HCT116 (cell line): ENCODE measurements at regions of chr17 and their contacts with region 1.

Region 1: GRCh38 chr17:17919169-17920107 is 52.8 kb downstream of the TOM1L2 start:
- DNase-seq: peak; percentile 54
- ATAC-seq: peak; percentile 48
- H3K4me3 ChIP-seq: no peak overlapping the region
- H3K27ac ChIP-seq: peak overlapping the region; percentile 98
- H3K4me1 ChIP-seq: peaks cover 66 to 78% of the 10 kb centered on the region in 2 experiments
- H3K27me3 ChIP-seq: no peaks in the 10 kb centered on the region
- CTCF ChIP-seq: peak; percentile 90 to 93 (median 91)
- POLR2A ChIP-seq: no peak
- RAD21 ChIP-seq: peak; percentile 96

Region 2: GRCh38 chr17:17681187-17681848 is 238.1 kb before region 1 on chr17 and contains the start of gene RAI1:
- CTCF ChIA-PET with region 1: interaction called, 3 read pairs
- POLR2A ChIA-PET with region 1: no interaction called
- RAD21 ChIA-PET with region 1: interaction called in 1 of 2 experiments, 5 read pairs
- intact Hi-C with region 1: loop called (anchors 2 kb)
- DNase-seq: no peak
- ATAC-seq: peak; percentile 62
- H3K4me3 ChIP-seq: peak within 1 kb of the TSS; percentile 75 to 86
- H3K27ac ChIP-seq: peak within 1 kb of the TSS; percentile 97
- H3K4me1 ChIP-seq: peaks cover 40 to 56% of the 10 kb centered on the region in 2 experiments
- H3K27me3 ChIP-seq: no peaks in the 10 kb centered on the region
- CTCF ChIP-seq: peak in 2 of 3 experiments; percentile 50 to 51; a peak in 4 of 6 replicates
- POLR2A ChIP-seq: no peak
- RAD21 ChIP-seq: peak; percentile 64
- total RNA-seq, gene RAI1: 38.5 TPM

Region 3: DNA sequence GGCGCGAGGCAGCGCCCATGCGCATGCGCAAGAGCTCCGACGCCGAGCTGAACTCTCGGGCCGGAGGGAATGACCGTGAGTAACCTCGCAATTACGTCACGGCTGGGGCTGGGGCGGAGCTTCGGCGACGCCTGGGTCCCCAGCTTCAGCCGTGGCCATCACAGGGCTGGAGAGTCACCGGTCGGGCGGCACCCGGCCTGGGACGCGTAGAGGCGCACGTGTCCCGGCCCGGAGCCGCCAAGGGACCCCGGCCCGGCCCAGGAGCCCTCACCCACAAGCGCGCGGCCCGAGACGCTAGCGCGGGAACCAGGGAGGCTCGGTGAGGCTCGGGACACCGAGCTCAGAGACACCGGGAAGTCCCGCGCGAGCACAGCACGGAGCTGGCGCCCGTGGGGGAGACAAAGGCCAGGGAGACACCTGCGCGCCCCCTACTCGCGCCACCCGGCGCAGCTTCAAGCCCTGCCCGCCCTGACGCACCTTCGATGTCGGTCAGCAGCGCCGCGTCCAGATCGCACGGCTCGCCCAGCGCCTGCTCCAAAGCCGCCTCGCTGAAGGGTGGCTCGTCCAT is 83.1 kb before region 1 on chr17:
- CTCF ChIA-PET with region 1: interaction called, 7 read pairs
- POLR2A ChIA-PET with region 1: interaction called, 14 read pairs
- RAD21 ChIA-PET with region 1: no interaction called
- intact Hi-C with region 1: no loop called
- DNase-seq: peak; percentile 92
- ATAC-seq: peak; percentile 70
- H3K4me3 ChIP-seq: peak overlapping the region; percentile 78 to 84
- H3K27ac ChIP-seq: peak overlapping the region; percentile 98
- H3K4me1 ChIP-seq: peaks cover 55 to 84% of the 10 kb centered on the region in 2 experiments
- H3K27me3 ChIP-seq: no peaks in the 10 kb centered on the region
- CTCF ChIP-seq: no peak
- POLR2A ChIP-seq: peak; percentile 97
- RAD21 ChIP-seq: peak; percentile 15; the same call in 1 of the 2 replicates

Region 4: DNA sequence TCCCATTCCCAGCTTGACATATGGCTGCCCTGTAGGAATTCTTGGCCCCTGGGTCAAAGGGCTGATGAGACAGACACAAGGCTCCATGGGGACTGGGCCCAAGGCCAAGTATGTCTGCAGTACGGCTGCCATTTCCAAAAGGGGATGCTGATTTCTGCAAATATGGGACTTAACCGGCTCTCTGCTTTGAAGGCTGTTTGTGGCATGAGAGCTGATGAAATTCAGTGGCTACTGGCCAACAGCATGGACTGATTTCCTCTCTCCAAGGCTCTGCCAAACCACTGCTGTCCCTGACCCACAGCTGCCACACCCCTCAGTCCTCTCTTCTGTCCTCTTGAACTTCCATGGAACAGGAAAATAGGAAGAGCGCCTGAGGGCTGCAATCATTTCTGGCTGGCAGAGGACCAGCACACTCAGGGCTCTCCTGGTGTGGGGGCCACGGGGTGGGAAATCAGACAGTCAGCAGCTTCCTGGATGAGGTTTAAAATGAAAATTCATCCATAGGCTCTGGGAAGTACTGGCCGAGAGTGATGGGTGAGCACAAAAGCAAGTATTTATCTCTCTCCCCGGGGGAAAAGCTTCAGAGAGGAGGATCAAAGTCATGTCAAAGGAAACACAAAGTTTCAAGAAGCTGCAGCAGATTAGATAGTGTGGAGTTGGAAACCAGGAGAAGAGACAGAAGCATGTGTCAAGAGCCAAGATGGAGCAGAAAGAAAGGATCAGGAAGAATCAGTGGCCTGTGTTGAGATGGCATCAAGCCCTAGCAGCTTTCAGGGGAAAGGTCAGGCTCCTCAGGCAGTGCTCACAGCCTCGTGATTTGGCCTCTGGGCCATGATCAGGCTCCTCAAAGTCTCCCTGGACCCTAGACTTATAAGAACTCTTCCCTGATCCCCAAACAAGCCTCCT is 18.6 kb before region 1 on chr17:
- CTCF ChIA-PET with region 1: interaction called, 18 read pairs
- POLR2A ChIA-PET with region 1: no interaction called
- RAD21 ChIA-PET with region 1: interaction called in 1 of 2 experiments, 5 read pairs
- intact Hi-C with region 1: no loop called
- DNase-seq: peak; percentile 78
- ATAC-seq: peak; percentile 81
- H3K4me3 ChIP-seq: peak overlapping the region in 1 of 2 experiments; percentile 21; a peak in 2 of 4 replicates
- H3K27ac ChIP-seq: peak overlapping the region; percentile 50
- H3K4me1 ChIP-seq: peaks cover 47 to 48% of the 10 kb centered on the region in 2 experiments
- H3K27me3 ChIP-seq: no peaks in the 10 kb centered on the region
- CTCF ChIP-seq: no peak
- POLR2A ChIP-seq: no peak
- RAD21 ChIP-seq: no peak; the same call in 1 of the 2 replicates

Region 5: DNA sequence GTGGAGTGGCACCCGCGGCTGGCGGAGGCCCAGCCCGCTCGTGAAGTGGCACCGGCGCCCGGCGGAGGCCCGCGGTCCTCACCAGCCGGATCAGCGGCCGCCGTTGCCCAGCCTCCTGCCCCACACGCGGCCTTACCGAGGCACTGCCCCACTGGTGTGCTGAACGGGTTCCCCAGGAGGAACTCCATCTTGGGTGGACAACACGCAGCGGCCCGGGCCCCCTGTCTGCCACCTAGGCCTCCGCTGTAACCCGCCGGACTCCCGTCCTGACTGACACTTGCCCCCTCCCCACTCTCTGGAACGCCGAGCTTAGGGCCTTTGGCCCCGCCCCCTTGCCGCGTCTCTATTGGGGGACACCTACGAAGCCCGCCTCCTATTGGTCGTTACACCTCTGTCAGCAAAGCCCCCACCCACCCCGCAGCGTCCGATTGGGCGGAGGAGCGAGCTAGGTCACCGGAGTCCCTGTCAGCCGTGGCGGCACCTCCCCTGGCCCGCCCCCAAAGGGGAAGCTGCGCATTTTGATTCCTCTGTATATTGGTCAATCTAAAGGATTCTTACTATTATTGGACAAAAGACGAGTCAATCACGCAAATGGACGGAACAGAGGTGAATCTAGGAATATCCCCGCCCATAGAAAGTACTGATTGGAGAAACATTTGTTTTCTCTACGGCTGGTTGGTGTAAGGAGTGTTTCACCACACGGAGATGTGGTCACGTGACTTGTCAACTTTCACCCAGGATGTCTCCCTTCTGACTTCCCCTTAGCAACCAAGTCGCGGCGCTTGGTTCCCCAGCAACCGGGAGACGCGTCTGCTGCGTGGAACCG is 52.9 kb after region 1 on chr17 and contains the starts of genes DRC3 and TOM1L2:
- CTCF ChIA-PET with region 1: interaction called, 6 read pairs
- POLR2A ChIA-PET with region 1: interaction called, 3 read pairs
- RAD21 ChIA-PET with region 1: no interaction called
- intact Hi-C with region 1: loop called (anchors 1 kb)
- DNase-seq: peak; percentile 100
- ATAC-seq: peak; percentile 94
- H3K4me3 ChIP-seq: peak within 1 kb of the TSS; percentile 67 to 68
- H3K27ac ChIP-seq: peak within 1 kb of the TSS; percentile 62
- H3K4me1 ChIP-seq: peaks cover 11 to 23% of the 10 kb centered on the region in 2 experiments
- H3K27me3 ChIP-seq: no peaks in the 10 kb centered on the region
- CTCF ChIP-seq: no peak
- POLR2A ChIP-seq: no peak
- RAD21 ChIP-seq: no peak
- total RNA-seq, gene DRC3: 2.4 TPM
- total RNA-seq, gene TOM1L2: 24.1 TPM